Right ventricle myocardium inferior (tissue), 1 donor: ENCODE measurements at regions of chr12 and their contacts with region 1.

Region 1: DNA sequence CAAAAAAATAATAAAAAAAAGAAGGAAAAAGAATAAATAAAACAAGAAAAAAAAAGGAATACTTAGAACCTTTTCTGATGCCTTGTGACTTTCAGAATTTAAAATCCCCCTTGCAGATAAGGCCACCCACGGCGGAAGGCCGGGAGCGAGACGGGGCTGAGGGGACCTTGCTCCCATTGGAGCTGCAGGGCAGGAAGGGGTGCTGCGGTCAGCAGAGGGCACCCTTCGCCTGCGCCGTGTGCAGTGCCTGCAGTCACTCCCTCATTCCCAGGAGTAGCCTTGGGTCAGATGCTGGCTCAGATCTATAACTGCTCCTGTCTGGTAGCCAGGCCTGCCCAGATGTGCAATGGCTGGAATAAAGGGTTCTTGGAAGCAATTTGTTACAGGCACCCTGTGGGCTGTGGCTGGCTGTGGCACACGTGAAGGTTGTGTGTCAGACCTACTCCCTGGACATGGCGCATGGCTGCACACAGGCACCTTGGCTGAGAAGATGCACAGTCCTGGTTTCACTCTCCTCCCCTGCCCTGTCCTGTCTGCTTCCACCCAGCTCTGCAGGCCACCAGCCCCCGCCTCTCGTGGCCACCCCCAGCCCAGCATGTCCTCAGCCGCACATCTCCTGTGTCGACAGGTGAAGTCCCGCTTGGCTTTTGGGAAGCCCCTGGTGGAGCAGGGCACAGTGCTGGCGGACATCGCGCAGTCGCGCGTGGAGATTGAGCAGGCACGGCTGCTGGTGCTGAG is 13.4 kb upstream of the ALDH2 start:
- DNase-seq: peak; percentile 79
- ATAC-seq: peak; percentile 84

Region 2: GRCh38 chr12:111775205-111776193 is 22.2 kb after region 1 on chr12:
- intact Hi-C with region 1: loop called (anchors 2 kb)
- DNase-seq: peak; percentile 93
- ATAC-seq: peak; percentile 78

Region 3: GRCh38 chr12:111788178-111788654 is 34.9 kb after region 1 on chr12:
- intact Hi-C with region 1: loop called (anchors 1 kb)
- DNase-seq: no peak
- ATAC-seq: peak; percentile 70

Region 4: DNA sequence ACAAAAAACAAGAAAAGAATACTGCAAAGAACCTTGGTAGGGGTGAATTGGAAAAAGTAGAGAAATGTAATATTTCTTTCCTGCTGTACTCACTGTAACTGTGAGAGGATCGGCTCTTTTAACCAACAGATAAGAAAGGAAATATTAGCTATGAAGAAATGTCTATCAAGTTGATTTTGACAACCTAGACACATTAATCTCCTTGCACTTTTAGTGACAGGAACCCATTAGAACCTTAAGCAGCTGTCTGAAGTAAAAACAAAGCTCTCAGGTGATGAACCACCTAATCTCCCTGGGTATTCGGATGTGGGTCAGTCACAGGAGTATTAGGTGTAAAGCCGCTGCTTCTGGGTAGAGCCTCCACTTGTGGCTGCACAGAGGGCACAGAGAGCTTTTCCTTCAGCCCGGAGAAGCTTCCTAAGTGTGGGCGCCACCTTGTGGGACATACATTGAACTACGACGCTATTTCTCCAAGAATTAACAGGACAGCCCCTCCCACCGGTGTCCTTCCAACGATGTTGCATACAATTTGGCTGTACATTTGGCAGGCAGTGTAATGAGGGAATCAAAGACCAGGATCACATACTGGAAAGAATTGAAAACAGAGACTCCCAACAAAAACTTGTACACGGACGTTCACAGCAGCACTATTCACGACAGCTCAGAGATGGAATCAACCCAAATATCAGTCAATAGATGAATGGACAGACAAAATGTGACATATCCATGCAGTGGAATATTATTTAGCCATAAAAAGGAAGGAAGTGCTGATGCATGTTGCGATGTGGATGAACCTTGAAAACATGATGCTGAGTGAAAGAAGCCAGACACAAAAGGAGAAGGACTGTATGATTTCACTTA is 59.8 kb after region 1 on chr12:
- intact Hi-C with region 1: loop called (anchors 1 kb)
- DNase-seq: peak; percentile 83
- ATAC-seq: peak; percentile 92